B cell (primary cell): ENCODE measurements at regions of chr17 and their contacts with region 1.

Region 1: DNA sequence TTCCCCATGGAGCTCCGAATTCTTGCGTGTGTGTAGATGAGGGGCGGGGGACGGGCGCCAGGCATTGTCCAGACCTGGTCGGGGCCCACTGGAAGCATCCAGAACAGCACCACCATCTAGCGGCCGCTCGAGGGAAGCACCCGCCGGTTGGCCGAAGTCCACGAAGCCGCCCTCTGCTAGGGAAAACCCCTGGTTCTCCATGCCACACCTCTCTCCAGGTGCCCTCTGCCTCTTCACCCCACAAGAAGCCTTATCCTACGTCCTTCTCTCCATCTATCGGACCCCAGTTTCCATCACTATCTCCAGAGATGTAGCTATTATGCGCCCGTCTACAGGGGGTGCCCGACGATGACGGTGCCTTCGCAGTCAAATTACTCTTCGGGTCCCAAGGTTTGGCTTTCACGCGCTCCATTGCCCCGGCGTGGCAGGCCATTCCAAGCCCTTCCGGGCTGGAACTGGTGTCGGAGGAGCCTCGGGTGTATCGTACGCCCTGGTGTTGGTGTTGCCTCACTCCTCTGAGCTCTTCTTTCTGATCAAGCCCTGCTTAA is 617 bp upstream of the SENP3 start:
- DNase-seq: peak; percentile 89
- ATAC-seq: peak; percentile 64
- H3K4me3 ChIP-seq: peak overlapping the region; percentile 53 to 95 (median 81)
- H3K4me3 Mint-ChIP-seq: peak overlapping the region; percentile 97
- H3K27ac ChIP-seq: peak overlapping the region; percentile 97
- H3K27ac Mint-ChIP-seq: peak overlapping the region; percentile 98
- H3K4me1 ChIP-seq: peaks cover 41 to 61% of the 10 kb centered on the region in 2 donors
- H3K4me1 Mint-ChIP-seq: peaks cover 53% of the 10 kb centered on the region
- H3K27me3 ChIP-seq: no peaks in the 10 kb centered on the region
- H3K27me3 Mint-ChIP-seq: no peaks in the 10 kb centered on the region
- CTCF ChIP-seq: peak; percentile 80

Region 2: DNA sequence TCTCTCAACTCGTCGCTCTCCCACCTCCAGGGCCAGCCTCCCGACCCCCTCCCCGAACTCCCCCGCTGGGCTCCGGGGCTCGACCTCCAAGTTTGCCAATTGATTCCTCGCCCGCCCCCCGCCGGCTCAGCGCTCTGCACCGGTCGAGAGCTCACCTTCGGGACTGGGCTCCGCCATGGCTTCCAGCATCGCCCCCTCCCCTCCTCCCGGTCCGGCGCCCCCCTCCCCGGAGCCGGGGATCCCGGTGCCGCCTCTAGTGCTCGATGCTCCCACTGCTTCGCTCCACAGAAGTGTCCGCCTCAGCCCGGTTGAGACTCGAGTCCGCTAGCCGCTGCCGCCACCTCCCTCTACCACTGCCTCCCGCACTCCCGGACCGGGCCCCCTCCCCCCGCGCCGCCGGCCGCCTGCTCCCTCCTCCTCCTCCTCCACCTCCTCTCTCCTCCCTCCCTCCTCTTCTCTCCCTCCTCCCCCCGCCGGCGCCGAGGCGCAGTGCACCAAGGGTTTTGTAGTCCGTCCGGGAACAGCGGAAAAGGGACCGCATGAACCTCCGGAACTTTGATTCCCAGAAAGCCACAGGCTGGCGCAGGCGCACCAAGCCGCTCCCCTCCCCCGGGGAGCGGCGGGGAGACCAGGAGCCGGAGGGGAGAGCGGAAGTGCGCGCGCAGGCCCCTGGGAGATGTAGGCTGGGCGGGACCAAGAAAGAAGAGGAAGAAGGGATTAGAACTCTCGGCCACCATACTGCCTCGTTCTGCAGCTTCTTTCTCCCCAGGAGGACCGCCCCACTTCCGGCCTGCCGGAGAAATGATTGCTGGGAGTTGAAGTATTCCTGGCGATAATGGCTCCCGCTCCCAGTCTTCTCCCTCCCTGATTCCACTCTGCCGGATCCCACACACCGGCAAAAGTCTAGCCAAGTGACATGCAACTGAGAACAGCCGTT is 321.7 kb before region 1 on chr17 and contains the start of gene PHF23:
- CTCF ChIA-PET with region 1: no interaction called
- POLR2A ChIA-PET with region 1: no interaction called
- intact Hi-C with region 1: loop called (anchors 5 kb)
- DNase-seq: peak; percentile 98
- ATAC-seq: peak; percentile 64
- H3K4me3 ChIP-seq: peak within 1 kb of the TSS; percentile 74 to 97 (median 75)
- H3K4me3 Mint-ChIP-seq: peak within 1 kb of the TSS; percentile 98
- H3K27ac ChIP-seq: peak within 1 kb of the TSS; percentile 55 to 97
- H3K27ac Mint-ChIP-seq: peak within 1 kb of the TSS; percentile 100
- H3K4me1 ChIP-seq: peaks cover 42 to 49% of the 10 kb centered on the region in 2 donors
- H3K4me1 Mint-ChIP-seq: peaks cover 61% of the 10 kb centered on the region
- H3K27me3 ChIP-seq: no peaks in the 10 kb centered on the region
- H3K27me3 Mint-ChIP-seq: no peaks in the 10 kb centered on the region
- CTCF ChIP-seq: no peak
- total RNA-seq, gene PHF23: 42.3 and 45.8 TPM in 2 replicates

Region 3: GRCh38 chr17:7280519-7281429 is 280.3 kb before region 1 on chr17:
- CTCF ChIA-PET with region 1: interaction called, 4 read pairs
- POLR2A ChIA-PET with region 1: interaction called, 3 read pairs
- intact Hi-C with region 1: loop called (anchors 1 kb)
- DNase-seq: peak; percentile 85
- ATAC-seq: peak; percentile 84
- H3K4me3 ChIP-seq: peak overlapping the region; percentile 2 to 69 (median 53)
- H3K4me3 Mint-ChIP-seq: peak overlapping the region; percentile 92
- H3K27ac ChIP-seq: no peak overlapping the region
- H3K27ac Mint-ChIP-seq: peak overlapping the region; percentile 76
- H3K4me1 ChIP-seq: peaks cover 20 to 31% of the 10 kb centered on the region in 2 donors
- H3K4me1 Mint-ChIP-seq: peaks cover 20% of the 10 kb centered on the region
- H3K27me3 ChIP-seq: peaks cover 0 to 46% (median 13%) of the 10 kb centered on the region in 4 experiments
- H3K27me3 Mint-ChIP-seq: peaks cover 18% of the 10 kb centered on the region
- CTCF ChIP-seq: peak; percentile 91

Region 4: DNA sequence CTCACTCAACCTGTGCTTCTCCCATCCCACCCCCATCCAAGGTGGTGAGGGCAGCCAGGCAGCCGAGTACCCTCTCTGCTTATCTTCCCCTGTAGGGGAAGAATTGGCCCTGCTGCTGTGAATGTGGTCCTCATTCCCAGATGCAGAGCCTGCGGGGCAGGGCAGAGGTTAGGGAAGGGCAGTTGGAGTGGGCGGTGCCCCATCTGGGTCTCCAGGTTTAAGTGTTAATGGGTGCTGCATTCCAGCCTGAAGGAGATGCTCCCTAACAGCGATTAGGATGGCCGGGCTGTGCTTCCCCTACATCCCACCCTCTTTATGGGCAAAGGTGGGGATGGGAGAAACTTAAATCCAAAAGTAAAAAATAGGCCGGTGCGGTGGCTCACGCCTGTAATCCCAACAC is 194.0 kb before region 1 on chr17:
- CTCF ChIA-PET with region 1: no interaction called
- POLR2A ChIA-PET with region 1: no interaction called
- intact Hi-C with region 1: no loop called
- DNase-seq: no peak
- ATAC-seq: no peak
- H3K4me3 ChIP-seq: no peak overlapping the region
- H3K4me3 Mint-ChIP-seq: no peak overlapping the region
- H3K27ac ChIP-seq: no peak overlapping the region
- H3K27ac Mint-ChIP-seq: no peak overlapping the region
- H3K4me1 ChIP-seq: no peaks in the 10 kb centered on the region
- H3K4me1 Mint-ChIP-seq: no peaks in the 10 kb centered on the region
- H3K27me3 ChIP-seq: peaks cover 0 to 5% (median 0%) of the 10 kb centered on the region in 4 experiments
- H3K27me3 Mint-ChIP-seq: peaks cover 3% of the 10 kb centered on the region
- CTCF ChIP-seq: no peak

Region 5: GRCh38 chr17:7509937-7510336 is 51.2 kb before region 1 on chr17:
- CTCF ChIA-PET with region 1: interaction called, 666 read pairs
- POLR2A ChIA-PET with region 1: interaction called, 32 read pairs
- intact Hi-C with region 1: loop called (anchors 1 kb)
- DNase-seq: no peak
- ATAC-seq: no peak
- H3K4me3 ChIP-seq: no peak overlapping the region
- H3K4me3 Mint-ChIP-seq: no peak overlapping the region
- H3K27ac ChIP-seq: no peak overlapping the region
- H3K27ac Mint-ChIP-seq: no peak overlapping the region
- H3K4me1 ChIP-seq: no peaks in the 10 kb centered on the region
- H3K4me1 Mint-ChIP-seq: no peaks in the 10 kb centered on the region
- H3K27me3 ChIP-seq: no peaks in the 10 kb centered on the region
- H3K27me3 Mint-ChIP-seq: no peaks in the 10 kb centered on the region
- CTCF ChIP-seq: no peak

Region 6: GRCh38 chr17:7523033-7523432 is 38.1 kb before region 1 on chr17:
- CTCF ChIA-PET with region 1: interaction called, 666 read pairs
- POLR2A ChIA-PET with region 1: interaction called, 4 read pairs
- intact Hi-C with region 1: loop called (anchors 1 kb)
- DNase-seq: peak; percentile 68
- ATAC-seq: peak; percentile 51
- H3K4me3 ChIP-seq: no peak overlapping the region
- H3K4me3 Mint-ChIP-seq: no peak overlapping the region
- H3K27ac ChIP-seq: no peak overlapping the region
- H3K27ac Mint-ChIP-seq: no peak overlapping the region
- H3K4me1 ChIP-seq: no peaks in the 10 kb centered on the region
- H3K4me1 Mint-ChIP-seq: no peaks in the 10 kb centered on the region
- H3K27me3 ChIP-seq: no peaks in the 10 kb centered on the region
- H3K27me3 Mint-ChIP-seq: no peaks in the 10 kb centered on the region
- CTCF ChIP-seq: peak; percentile 71

Region 7: DNA sequence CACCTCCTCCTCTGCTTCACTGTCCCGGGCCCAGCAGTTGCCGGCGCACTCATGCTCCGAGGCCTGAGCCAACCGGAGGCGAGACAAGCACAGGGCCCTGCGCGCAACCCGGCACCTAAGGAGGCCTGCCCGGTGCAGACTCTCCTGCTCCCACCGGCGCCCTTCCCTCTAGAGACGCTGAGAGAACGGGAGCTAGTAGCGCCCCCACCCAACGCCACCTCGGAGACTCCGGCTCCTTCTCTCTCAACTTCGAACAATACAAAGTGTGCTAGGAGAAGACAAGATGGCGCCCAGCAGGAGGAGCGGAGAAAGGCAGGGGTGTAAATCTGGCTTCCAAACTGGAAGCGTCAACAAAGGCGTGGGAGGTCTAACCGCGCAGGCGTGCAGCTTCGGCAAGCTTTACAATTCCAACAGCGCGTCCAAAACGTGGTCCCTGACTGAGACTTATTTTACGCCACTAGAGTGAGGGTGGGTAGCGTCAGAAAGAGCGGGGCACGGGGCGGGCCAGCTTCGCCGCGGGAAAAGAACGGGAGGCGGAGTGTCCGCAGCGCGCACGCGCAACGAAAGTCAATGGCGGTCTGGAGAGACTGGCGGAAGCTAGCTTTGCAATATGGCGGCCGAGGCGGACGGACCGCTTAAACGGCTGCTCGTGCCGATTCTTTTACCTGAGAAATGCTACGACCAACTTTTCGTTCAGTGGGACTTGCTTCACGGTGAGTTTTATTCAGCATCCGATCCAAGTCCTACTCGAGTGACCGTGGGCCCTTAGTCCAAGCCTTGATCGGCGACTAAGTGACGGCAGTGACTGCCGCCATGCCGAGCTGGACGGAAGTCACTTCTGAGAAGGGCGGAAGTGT is 22.4 kb after region 1 on chr17 and contains the start of gene MPDU1:
- CTCF ChIA-PET with region 1: interaction called, 50 read pairs
- POLR2A ChIA-PET with region 1: interaction called, 6 read pairs
- intact Hi-C with region 1: loop called (anchors 1 kb)
- DNase-seq: peak; percentile 98
- ATAC-seq: peak; percentile 78
- H3K4me3 ChIP-seq: peak within 1 kb of the TSS; percentile 77 to 96 (median 86)
- H3K4me3 Mint-ChIP-seq: peak within 1 kb of the TSS; percentile 100
- H3K27ac ChIP-seq: peak within 1 kb of the TSS; percentile 91 to 95
- H3K27ac Mint-ChIP-seq: peak within 1 kb of the TSS; percentile 100
- H3K4me1 ChIP-seq: peaks cover 48 to 68% of the 10 kb centered on the region in 2 donors
- H3K4me1 Mint-ChIP-seq: peaks cover 57% of the 10 kb centered on the region
- H3K27me3 ChIP-seq: no peaks in the 10 kb centered on the region
- H3K27me3 Mint-ChIP-seq: no peaks in the 10 kb centered on the region
- CTCF ChIP-seq: no peak
- total RNA-seq, gene MPDU1: 29.7 and 31.7 TPM in 2 replicates

Region 8: DNA sequence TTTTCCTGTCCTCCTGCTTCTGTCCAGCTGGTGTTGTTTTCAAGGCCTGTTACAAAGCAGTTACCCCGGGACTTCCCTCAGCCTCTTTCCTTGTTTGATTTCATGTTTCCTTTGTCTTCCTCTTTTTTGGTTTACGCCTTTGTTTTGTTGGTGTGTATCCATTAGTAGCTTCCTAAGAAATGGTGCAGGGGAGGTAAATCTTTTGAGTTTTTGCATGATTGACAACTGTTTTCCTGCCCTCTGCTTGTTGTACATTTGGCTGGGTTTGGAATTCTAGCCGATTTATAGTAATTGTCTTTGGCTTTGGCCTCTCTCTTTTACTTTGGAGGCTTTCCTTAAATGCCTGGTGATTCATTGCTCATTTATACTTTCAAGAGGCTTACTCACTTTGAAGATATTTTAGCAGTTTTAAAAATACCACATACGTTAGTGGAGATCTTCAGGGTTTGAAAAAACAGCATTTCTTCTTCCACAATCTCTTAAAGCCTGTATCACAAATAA is 189.3 kb after region 1 on chr17:
- CTCF ChIA-PET with region 1: no interaction called
- POLR2A ChIA-PET with region 1: no interaction called
- intact Hi-C with region 1: no loop called
- DNase-seq: no peak
- ATAC-seq: no peak
- H3K4me3 ChIP-seq: no peak overlapping the region
- H3K4me3 Mint-ChIP-seq: no peak overlapping the region
- H3K27ac ChIP-seq: no peak overlapping the region
- H3K27ac Mint-ChIP-seq: no peak overlapping the region
- H3K4me1 ChIP-seq: no peaks in the 10 kb centered on the region
- H3K4me1 Mint-ChIP-seq: no peaks in the 10 kb centered on the region
- H3K27me3 ChIP-seq: peaks cover 0 to 5% (median 0%) of the 10 kb centered on the region in 4 experiments
- H3K27me3 Mint-ChIP-seq: peaks cover 35% of the 10 kb centered on the region
- CTCF ChIP-seq: no peak